PC-9 (cell line): ENCODE measurements at regions of chr5 and their contacts with region 1.

Region 1: GRCh38 chr5:177390363-177391300 is 6.4 kb downstream of the SLC34A1 start:
- DNase-seq: peak; percentile 78 to 89
- H3K4me3 ChIP-seq: peak overlapping the region; percentile 25; the same call in 1 of the 2 replicates
- H3K27ac ChIP-seq: peak overlapping the region; percentile 96
- H3K4me1 ChIP-seq: peaks cover 35% of the 10 kb centered on the region
- H3K27me3 ChIP-seq: no peaks in the 10 kb centered on the region
- CTCF ChIP-seq: peak; percentile 97

Region 2: GRCh38 chr5:175867587-175868347 is 1522.9 kb before region 1 on chr5:
- CTCF ChIA-PET with region 1: no interaction called
- POLR2A ChIA-PET with region 1: no interaction called
- intact Hi-C with region 1: no loop called
- DNase-seq: no peak
- H3K4me3 ChIP-seq: no peak overlapping the region
- H3K27ac ChIP-seq: peak overlapping the region; percentile 21
- H3K4me1 ChIP-seq: peaks cover 28% of the 10 kb centered on the region
- H3K27me3 ChIP-seq: no peaks in the 10 kb centered on the region
- CTCF ChIP-seq: peak; percentile 65

Region 3: GRCh38 chr5:177311723-177312648 is 78.6 kb before region 1 on chr5 and contains the start of gene MXD3:
- CTCF ChIA-PET with region 1: interaction called, 11 read pairs
- POLR2A ChIA-PET with region 1: interaction called, 7 read pairs
- intact Hi-C with region 1: no loop called
- DNase-seq: peak; percentile 88 to 98
- H3K4me3 ChIP-seq: peak within 1 kb of the TSS; percentile 72
- H3K27ac ChIP-seq: peak within 1 kb of the TSS; percentile 58
- H3K4me1 ChIP-seq: peaks cover 10% of the 10 kb centered on the region; the same call in 1 of the 2 replicates
- H3K27me3 ChIP-seq: no peaks in the 10 kb centered on the region
- CTCF ChIP-seq: no peak
- total RNA-seq, gene MXD3: 50.0 and 54.8 TPM in 2 replicates

Region 4: GRCh38 chr5:177336112-177336511 is 54.5 kb before region 1 on chr5:
- CTCF ChIA-PET with region 1: interaction called, 10 read pairs
- POLR2A ChIA-PET with region 1: no interaction called
- intact Hi-C with region 1: no loop called
- DNase-seq: no peak
- H3K4me3 ChIP-seq: no peak overlapping the region
- H3K27ac ChIP-seq: no peak overlapping the region
- H3K4me1 ChIP-seq: peaks cover 18% of the 10 kb centered on the region
- H3K27me3 ChIP-seq: no peaks in the 10 kb centered on the region
- CTCF ChIP-seq: 0 out of 2 replicates have a peak, but pooled peaks have one; percentile 34

Region 5: GRCh38 chr5:177370488-177371119 is 20.0 kb before region 1 on chr5:
- CTCF ChIA-PET with region 1: interaction called, 42 read pairs
- POLR2A ChIA-PET with region 1: interaction called, 16 read pairs
- intact Hi-C with region 1: no loop called
- DNase-seq: peak; percentile 86 to 95
- H3K4me3 ChIP-seq: peak overlapping the region; percentile 54; the same call in 1 of the 2 replicates
- H3K27ac ChIP-seq: no peak overlapping the region
- H3K4me1 ChIP-seq: peaks cover 11% of the 10 kb centered on the region
- H3K27me3 ChIP-seq: no peaks in the 10 kb centered on the region
- CTCF ChIP-seq: peak; percentile 66

Region 6: DNA sequence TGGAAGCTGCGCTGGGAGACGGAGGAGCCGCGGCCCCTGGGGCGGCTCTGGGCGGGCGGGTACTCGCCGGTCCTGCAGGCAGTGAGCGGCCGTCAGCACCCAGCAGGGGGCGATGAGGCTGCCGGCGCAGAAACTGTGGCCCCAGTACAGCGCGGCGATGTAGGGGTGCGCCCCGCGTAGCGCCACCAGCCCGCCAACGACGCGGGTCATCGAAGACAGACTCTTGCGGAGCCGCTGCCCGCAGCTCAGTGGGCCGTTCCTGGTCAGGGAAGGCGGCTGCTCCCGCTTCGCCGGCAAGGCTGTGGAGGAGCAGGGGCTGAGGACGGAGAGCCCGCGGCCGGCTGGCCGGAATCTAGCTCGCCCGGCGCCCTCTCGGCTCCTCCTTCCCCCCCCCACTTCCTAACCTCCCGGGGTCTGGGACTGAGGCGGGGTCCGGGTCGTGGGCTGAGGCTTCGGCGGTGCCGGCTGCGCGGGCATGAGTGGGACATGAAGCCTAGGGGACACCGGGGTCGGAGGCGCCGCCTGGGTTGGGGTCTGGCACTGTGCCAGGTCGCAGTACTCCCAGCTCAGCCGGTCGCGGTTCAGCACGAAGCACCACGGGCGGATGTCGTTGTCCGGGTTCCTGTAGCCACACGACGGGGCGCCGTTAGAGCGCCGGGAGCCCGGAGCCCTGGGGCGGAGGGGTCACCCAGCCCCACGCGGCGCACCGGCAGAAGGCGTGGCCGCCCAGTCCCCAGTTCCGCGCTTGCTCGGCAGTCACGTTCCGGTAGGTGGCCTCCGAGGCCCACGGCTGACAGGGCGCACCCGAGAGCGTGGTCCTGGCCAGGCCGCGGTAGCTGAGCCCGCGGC is 13.4 kb after region 1 on chr5:
- CTCF ChIA-PET with region 1: interaction called, 53 read pairs
- POLR2A ChIA-PET with region 1: no interaction called
- intact Hi-C with region 1: loop called (anchors 1 kb)
- DNase-seq: peak; percentile 51 to 86
- H3K4me3 ChIP-seq: peak overlapping the region; percentile 78
- H3K27ac ChIP-seq: no peak overlapping the region
- H3K4me1 ChIP-seq: peaks cover 3% of the 10 kb centered on the region; the same call in 1 of the 2 replicates
- H3K27me3 ChIP-seq: no peaks in the 10 kb centered on the region
- CTCF ChIP-seq: peak; percentile 73

Region 7: DNA sequence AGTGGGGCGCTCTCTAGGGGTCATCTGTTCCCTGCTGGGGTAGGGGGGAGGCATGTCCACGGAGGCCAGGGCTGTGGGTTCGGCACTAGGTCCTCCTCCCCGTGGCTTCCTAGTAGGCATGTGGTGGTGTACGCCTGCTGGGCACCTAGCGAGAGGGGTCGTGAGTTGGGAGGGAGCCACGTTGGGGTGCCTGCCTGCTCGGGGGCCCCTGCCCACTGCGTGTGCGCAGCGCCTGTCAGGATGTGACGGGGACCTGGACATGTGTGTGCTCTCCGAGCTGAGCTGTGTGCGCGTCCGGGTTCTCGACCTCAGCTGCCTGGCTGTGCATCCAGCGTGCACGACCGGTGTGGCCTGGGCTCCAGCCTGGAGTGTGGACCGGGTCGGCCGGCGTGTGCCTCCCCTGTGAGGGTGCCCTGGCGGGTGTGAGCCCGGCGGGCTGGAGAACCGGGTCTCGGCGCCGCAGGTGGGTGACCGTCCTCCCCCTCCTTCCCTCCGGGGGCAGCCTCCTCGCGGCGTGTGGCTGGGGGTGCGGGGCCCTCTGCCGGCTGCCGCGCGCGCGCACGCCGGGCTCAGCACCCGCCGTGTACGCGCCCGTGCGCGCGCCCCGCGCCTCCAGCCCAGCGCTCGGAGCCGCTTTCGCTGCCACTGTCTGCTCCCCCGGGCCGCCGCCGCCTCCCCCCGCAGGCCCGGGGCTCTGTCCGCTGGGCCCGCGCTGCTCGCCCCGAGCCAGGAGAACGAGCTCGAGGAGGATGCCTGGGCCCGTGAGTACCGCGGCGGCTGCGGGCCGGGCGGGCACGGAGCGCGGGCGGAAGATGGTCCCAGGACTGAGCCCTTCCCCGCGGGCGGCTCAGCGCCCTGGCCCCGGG is 55.8 kb after region 1 on chr5 and contains the start of gene PRR7:
- CTCF ChIA-PET with region 1: interaction called, 10 read pairs
- POLR2A ChIA-PET with region 1: interaction called, 4 read pairs
- intact Hi-C with region 1: no loop called
- DNase-seq: peak in 1 of 2 experiments; percentile 73
- H3K4me3 ChIP-seq: peak within 1 kb of the TSS; percentile 68
- H3K27ac ChIP-seq: peak within 1 kb of the TSS; percentile 78
- H3K4me1 ChIP-seq: peaks cover 18% of the 10 kb centered on the region
- H3K27me3 ChIP-seq: no peaks in the 10 kb centered on the region
- CTCF ChIP-seq: no peak
- total RNA-seq, gene PRR7: 22.2 and 31.7 TPM in 2 replicates